CD4-positive, alpha-beta memory T cell (primary cell): ENCODE measurements at regions of chr1 and their contacts with region 1.

Region 1: GRCh38 chr1:206663832-206664652 is 20.7 kb upstream of the MAPKAPK2 start:
- DNase-seq: peak; percentile 64 to 76 (median 69)
- H3K4me3 ChIP-seq: no peak overlapping the region
- H3K4me3 Mint-ChIP-seq: peak overlapping the region in 2 of 8 donors; percentile 24 to 47
- H3K27ac ChIP-seq: no peak overlapping the region
- H3K27ac Mint-ChIP-seq: peak overlapping the region in 2 of 7 donors; percentile 25 to 33
- H3K4me1 ChIP-seq: peaks cover 14% of the 10 kb centered on the region
- H3K4me1 Mint-ChIP-seq: peaks cover 9 to 17% (median 11%) of the 10 kb centered on the region in 4 donors
- H3K27me3 ChIP-seq: no peaks in the 10 kb centered on the region
- H3K27me3 Mint-ChIP-seq: peaks cover 12 to 17% of the 10 kb centered on the region in 2 donors

Region 2: DNA sequence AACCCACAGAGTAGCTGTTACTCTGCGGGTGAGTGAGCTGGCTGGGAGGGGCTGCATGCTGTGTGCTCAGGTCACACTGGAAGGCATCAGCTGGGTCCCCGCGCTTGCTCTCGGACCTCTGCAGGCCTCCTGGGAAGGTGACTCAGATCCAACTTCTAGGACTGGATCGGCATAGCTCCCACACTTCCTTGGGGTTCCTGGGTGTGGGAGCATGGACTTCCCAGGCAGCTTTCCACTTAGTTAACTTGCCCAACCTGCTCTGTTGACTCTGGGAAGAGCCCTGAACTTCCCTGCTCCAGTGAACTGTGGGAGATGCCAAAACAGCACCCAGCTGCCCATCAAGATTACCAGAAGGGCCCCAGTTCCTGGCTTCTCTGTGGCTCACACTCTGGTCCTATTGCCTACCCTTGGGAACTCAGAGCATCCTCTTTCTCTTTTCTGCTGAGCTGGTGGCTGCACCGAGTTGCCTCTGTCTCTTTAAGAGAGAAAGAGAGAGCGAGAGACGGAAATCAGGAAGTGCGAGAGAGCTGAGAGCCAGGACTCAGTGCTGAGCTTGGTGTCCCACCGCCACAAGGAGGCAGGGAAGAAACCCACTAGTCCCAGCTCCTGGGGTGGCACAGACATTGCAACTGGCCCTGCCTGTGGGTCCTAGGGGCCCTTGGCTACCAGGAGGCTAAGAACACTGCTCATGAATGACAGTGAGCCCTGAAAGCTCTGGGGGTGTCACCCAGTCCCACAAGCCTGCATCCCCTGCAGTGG is 193.9 kb before region 1 on chr1 and contains the start of gene IKBKE:
- CTCF ChIA-PET with region 1: interaction called, 23 read pairs
- POLR2A ChIA-PET with region 1: no interaction called
- intact Hi-C with region 1: loop called (anchors 5 kb)
- DNase-seq: peak; percentile 44 to 69 (median 47)
- H3K4me3 ChIP-seq: peak within 1 kb of the TSS; percentile 99
- H3K4me3 Mint-ChIP-seq: peak within 1 kb of the TSS; percentile 84 to 97 (median 93)
- H3K27ac ChIP-seq: peak within 1 kb of the TSS; percentile 80
- H3K27ac Mint-ChIP-seq: peak within 1 kb of the TSS; percentile 64 to 95 (median 92)
- H3K4me1 ChIP-seq: peaks cover 86% of the 10 kb centered on the region
- H3K4me1 Mint-ChIP-seq: peaks cover 54 to 91% (median 79%) of the 10 kb centered on the region in 4 donors
- H3K27me3 ChIP-seq: no peaks in the 10 kb centered on the region
- H3K27me3 Mint-ChIP-seq: no peaks in the 10 kb centered on the region
- total RNA-seq, gene IKBKE: 81.8 to 92.3 TPM

Region 3: DNA sequence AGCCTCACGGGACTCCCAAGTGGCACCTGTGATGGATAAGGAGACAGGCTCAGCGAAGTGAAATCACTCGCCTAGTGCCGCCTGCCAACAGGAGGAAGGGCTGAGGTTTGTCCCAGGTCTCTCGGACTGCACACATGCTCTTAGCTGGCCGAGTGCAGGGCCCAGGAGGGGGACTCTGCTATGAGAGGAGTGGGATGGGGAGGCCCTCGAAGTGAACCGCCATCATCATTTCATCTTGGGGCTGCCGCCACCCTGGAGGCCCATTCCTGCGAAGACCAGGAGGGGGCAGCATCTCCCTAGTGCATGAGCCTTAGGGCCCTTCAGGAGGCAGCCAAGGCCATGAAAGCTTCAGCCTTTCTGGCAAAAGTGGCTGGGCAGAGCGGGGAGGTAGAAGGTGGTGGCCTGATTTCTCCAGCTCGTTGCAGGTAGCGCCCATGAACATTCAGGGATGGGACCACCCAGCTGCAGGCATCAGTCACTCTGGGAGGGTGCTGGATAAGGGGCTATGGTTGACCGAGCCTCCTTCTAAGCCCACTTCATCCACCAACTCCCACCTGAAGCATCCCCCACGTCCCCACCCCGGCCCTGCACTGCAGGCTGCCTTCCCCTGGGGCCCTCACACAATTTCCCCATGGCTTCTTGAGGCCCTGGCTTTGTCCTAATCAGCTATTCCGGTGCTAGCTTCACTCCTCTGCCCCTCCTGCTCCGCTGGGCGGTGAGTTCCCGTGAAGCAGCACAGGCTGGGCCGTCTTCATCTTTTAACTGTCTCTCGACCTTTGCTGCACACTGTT is 173.9 kb before region 1 on chr1:
- CTCF ChIA-PET with region 1: interaction called, 34 read pairs
- POLR2A ChIA-PET with region 1: interaction called, 5 read pairs
- intact Hi-C with region 1: no loop called
- DNase-seq: peak; percentile 46 to 62 (median 57)
- H3K4me3 ChIP-seq: no peak overlapping the region
- H3K4me3 Mint-ChIP-seq: no peak overlapping the region
- H3K27ac ChIP-seq: no peak overlapping the region
- H3K27ac Mint-ChIP-seq: peak overlapping the region in 4 of 7 donors; percentile 17 to 78 (median 56)
- H3K4me1 ChIP-seq: peaks cover under 1% of the 10 kb centered on the region
- H3K4me1 Mint-ChIP-seq: peaks cover 0 to 5% (median 0%) of the 10 kb centered on the region in 4 donors
- H3K27me3 ChIP-seq: no peaks in the 10 kb centered on the region
- H3K27me3 Mint-ChIP-seq: no peaks in the 10 kb centered on the region

Region 4: GRCh38 chr1:206600527-206600926 is 63.5 kb before region 1 on chr1:
- CTCF ChIA-PET with region 1: interaction called, 12 read pairs
- POLR2A ChIA-PET with region 1: no interaction called
- intact Hi-C with region 1: no loop called
- DNase-seq: no peak
- H3K4me3 ChIP-seq: no peak overlapping the region
- H3K4me3 Mint-ChIP-seq: no peak overlapping the region
- H3K27ac ChIP-seq: no peak overlapping the region
- H3K27ac Mint-ChIP-seq: no peak overlapping the region
- H3K4me1 ChIP-seq: no peaks in the 10 kb centered on the region
- H3K4me1 Mint-ChIP-seq: no peaks in the 10 kb centered on the region
- H3K27me3 ChIP-seq: no peaks in the 10 kb centered on the region
- H3K27me3 Mint-ChIP-seq: no peaks in the 10 kb centered on the region

Region 5: DNA sequence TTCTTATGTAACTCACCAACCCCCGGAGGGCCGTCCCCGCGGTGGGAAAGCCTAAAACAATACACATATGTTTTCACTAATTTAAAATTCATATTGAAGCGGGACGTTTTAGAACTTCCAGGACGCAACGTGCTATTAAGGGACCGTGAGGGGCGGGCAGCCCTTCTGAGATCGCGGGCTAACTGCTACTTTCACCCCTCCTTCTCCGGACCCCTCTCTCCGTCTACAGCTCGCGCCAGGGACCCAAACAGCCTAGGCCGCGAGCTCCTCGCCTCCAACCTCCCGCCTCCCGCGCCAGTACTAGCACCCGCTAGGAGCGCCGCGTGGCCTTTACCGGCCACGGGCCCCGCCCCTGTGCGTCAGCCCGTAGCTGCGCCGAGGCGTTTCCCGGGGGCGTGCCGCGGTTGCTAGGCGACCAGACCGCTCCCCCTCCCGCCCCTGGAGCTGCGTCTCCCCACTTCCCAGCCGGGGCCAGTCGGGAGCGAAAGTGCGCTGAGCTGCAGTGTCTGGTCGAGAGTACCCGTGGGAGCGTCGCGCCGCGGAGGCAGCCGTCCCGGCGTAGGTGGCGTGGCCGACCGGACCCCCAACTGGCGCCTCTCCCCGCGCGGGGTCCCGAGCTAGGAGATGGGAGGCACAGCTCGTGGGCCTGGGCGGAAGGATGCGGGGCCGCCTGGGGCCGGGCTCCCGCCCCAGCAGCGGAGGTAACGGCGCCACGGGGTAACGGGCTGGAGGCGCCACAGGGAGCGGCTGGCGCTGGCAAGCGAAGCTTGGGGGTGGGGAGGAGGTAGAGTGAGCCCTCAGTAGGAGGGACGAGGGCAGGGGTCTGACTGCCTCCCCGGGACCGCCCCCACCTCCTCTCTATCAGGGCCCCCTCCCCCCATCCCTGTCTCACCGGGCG is 28.7 kb before region 1 on chr1 and contains the start of gene DYRK3:
- CTCF ChIA-PET with region 1: interaction called, 274 read pairs
- POLR2A ChIA-PET with region 1: interaction called, 13 read pairs
- intact Hi-C with region 1: loop called (anchors 1 kb)
- DNase-seq: peak; percentile 84 to 91 (median 87)
- H3K4me3 ChIP-seq: peak within 1 kb of the TSS; percentile 37 to 87
- H3K4me3 Mint-ChIP-seq: peak within 1 kb of the TSS; percentile 87 to 96 (median 90)
- H3K27ac ChIP-seq: peak within 1 kb of the TSS; percentile 48
- H3K27ac Mint-ChIP-seq: peak within 1 kb of the TSS; percentile 85 to 96 (median 95)
- H3K4me1 ChIP-seq: peaks cover 15% of the 10 kb centered on the region
- H3K4me1 Mint-ChIP-seq: peaks cover 8 to 26% (median 13%) of the 10 kb centered on the region in 4 donors
- H3K27me3 ChIP-seq: no peaks in the 10 kb centered on the region
- H3K27me3 Mint-ChIP-seq: peaks cover 4 to 7% of the 10 kb centered on the region in 2 donors
- total RNA-seq, gene DYRK3: 0.78 to 1.2 TPM

Region 6: GRCh38 chr1:206651958-206652890 is 11.8 kb before region 1 on chr1:
- CTCF ChIA-PET with region 1: interaction called, 33 read pairs
- POLR2A ChIA-PET with region 1: no interaction called
- intact Hi-C with region 1: no loop called
- DNase-seq: no peak
- H3K4me3 ChIP-seq: no peak overlapping the region
- H3K4me3 Mint-ChIP-seq: no peak overlapping the region
- H3K27ac ChIP-seq: no peak overlapping the region
- H3K27ac Mint-ChIP-seq: no peak overlapping the region
- H3K4me1 ChIP-seq: no peaks in the 10 kb centered on the region
- H3K4me1 Mint-ChIP-seq: no peaks in the 10 kb centered on the region
- H3K27me3 ChIP-seq: no peaks in the 10 kb centered on the region
- H3K27me3 Mint-ChIP-seq: peaks cover 0 to 3% of the 10 kb centered on the region in 2 donors

Region 7: GRCh38 chr1:206684478-206685333 is 20.7 kb after region 1 on chr1 and contains the start of gene MAPKAPK2:
- CTCF ChIA-PET with region 1: interaction called, 37 read pairs
- POLR2A ChIA-PET with region 1: no interaction called
- intact Hi-C with region 1: no loop called
- DNase-seq: peak; percentile 71 to 77 (median 73)
- H3K4me3 ChIP-seq: peak within 1 kb of the TSS; percentile 55 to 93
- H3K4me3 Mint-ChIP-seq: peak within 1 kb of the TSS; percentile 93 to 100 (median 96)
- H3K27ac ChIP-seq: peak within 1 kb of the TSS; percentile 90
- H3K27ac Mint-ChIP-seq: peak within 1 kb of the TSS; percentile 94 to 98 (median 97)
- H3K4me1 ChIP-seq: peaks cover 45% of the 10 kb centered on the region
- H3K4me1 Mint-ChIP-seq: peaks cover 26 to 52% (median 37%) of the 10 kb centered on the region in 4 donors
- H3K27me3 ChIP-seq: no peaks in the 10 kb centered on the region
- H3K27me3 Mint-ChIP-seq: peaks cover 2 to 3% of the 10 kb centered on the region in 2 donors
- total RNA-seq, gene MAPKAPK2: 71.7 to 72.8 TPM